K562 (cell line): ENCODE measurements at regions of chr6 and their contacts with region 1.

Region 1: GRCh38 chr6:42873313-42873712 is 6.1 kb upstream of the RPL7L1 start:
- DNase-seq: no peak
- ATAC-seq: no peak
- H3K4me3 ChIP-seq: no peak overlapping the region
- H3K27ac ChIP-seq: no peak overlapping the region
- H3K4me1 ChIP-seq: peaks cover 0 to 4% of the 10 kb centered on the region in 2 experiments; a peak in 1 of 5 replicates
- H3K27me3 ChIP-seq: no peaks in the 10 kb centered on the region
- CTCF ChIP-seq: no peak
- EP300 ChIP-seq: no peak
- POLR2A ChIP-seq: no peak
- RAD21 ChIP-seq: no peak

Region 2: DNA sequence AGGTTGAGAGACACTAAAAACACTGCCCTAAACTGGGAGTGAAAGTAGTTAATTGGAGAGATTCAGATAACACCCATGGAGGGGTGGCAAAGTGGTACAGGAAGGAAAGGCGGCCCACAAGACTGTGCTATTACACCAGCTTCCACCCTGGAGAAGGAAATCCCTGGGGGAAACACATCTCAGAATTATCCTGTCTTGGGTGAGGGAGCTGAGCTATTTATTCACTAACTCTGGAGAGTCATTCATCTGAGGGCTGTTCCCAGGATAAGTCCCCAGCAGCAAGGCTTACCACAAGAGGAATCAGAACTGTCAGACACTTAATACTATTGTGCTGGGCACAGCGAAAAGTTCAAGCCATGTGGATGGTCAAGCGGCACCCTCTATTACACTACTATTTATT is 137.3 kb before region 1 on chr6:
- CTCF ChIA-PET with region 1: interaction called, 4 read pairs
- POLR2A ChIA-PET with region 1: interaction called, 3 read pairs
- in situ Hi-C with region 1: loop called (anchors 5 kb)
- intact Hi-C with region 1: no loop called
- DNase-seq: no peak
- ATAC-seq: no peak
- H3K4me3 ChIP-seq: no peak overlapping the region
- H3K27ac ChIP-seq: no peak overlapping the region
- H3K4me1 ChIP-seq: no peaks in the 10 kb centered on the region; a peak in 1 of 5 replicates
- H3K27me3 ChIP-seq: no peaks in the 10 kb centered on the region
- CTCF ChIP-seq: no peak
- EP300 ChIP-seq: no peak
- POLR2A ChIP-seq: no peak
- RAD21 ChIP-seq: no peak